ENCODE measurements at regions of chr10 and their contacts with region 1.

Region 1: DNA sequence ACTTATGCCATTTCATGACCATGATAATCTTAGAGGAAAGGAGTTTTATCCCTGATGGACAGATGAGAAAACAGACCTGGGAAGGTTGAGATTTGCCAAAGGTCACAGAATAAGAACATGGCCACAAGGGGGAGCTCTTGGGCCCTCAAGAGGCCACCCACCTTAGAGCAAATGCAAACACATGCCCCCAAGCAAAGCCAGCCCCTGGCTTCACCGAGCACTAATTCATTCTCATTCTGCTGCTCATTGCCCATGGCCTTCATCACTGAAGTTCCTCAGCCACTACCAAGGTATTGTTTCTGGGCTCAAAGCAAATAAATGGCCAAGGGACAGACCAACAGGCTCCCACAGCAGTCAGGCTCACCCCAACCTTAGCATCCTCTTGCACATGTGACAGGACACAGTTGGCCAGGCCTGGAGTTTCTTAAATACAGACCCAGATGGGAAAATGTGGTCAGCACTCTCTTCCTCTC is 44.2 kb downstream of the PDLIM1 start:
- DNase-seq: peak; percentile 68
- H3K4me3 ChIP-seq: no peak overlapping the region
- H3K27ac ChIP-seq: no peak overlapping the region
- H3K4me1 ChIP-seq: no peaks in the 10 kb centered on the region
- H3K27me3 ChIP-seq: peaks cover 18% of the 10 kb centered on the region
- CTCF ChIP-seq: peak; percentile 78

Region 2: DNA sequence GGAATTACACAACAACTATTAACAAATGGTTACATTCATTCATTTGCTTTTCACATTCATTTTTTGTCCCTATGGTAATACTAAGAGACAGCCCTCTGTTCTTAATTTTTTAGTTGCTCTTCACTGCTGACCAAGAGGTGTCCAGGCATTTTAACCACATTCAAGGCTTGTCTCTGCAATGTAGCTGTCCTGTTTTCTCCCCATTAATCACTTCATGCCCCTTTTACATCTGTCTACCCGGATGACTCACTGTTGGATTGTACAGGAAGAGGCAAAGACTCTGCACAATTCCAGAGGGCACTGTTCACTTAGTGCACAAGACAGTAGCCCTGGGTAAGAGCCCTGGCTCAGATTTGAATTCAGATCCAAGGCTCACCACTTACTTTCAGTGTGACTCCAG is 1052.4 kb before region 1 on chr10:
- CTCF ChIA-PET with region 1: no interaction called
- POLR2A ChIA-PET with region 1: no interaction called
- intact Hi-C with region 1: no loop called
- DNase-seq: peak; percentile 22
- H3K4me3 ChIP-seq: no peak overlapping the region
- H3K27ac ChIP-seq: no peak overlapping the region
- H3K4me1 ChIP-seq: peaks cover 3% of the 10 kb centered on the region
- H3K27me3 ChIP-seq: no peaks in the 10 kb centered on the region
- CTCF ChIP-seq: no peak

Region 3: DNA sequence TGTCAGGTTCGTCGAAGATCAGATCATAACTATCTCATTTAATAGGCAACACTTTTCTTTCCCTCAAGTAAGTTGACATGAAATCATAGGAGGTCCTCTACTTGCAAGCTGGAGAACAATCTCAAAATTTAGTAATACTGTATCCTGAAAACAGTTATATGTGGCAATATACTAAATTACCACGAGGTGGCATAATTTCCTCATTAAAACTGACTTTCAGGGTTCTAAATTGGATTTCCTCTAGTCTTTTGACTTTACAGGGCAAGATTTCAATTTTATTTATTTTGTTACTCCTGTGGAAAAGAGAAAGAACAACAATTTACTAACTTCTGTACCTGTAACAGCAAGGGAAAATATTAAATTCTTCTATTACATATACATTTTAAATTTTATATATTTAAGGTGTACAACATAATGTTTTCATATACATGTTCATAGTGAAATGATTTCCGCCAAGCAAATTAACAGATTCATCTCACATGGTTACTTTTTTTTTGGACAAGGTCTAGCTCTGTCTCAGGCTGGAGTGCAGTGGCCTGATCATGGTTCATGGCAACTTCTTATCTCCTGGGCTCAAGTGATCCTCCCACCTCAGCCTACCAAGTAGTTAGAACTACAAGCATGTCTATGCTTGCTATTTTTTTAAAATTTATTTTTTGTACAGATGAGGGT is 616.5 kb before region 1 on chr10:
- CTCF ChIA-PET with region 1: no interaction called
- POLR2A ChIA-PET with region 1: no interaction called
- intact Hi-C with region 1: loop called (anchors 1 kb)
- DNase-seq: peak; percentile 49
- H3K4me3 ChIP-seq: no peak overlapping the region
- H3K27ac ChIP-seq: no peak overlapping the region
- H3K4me1 ChIP-seq: no peaks in the 10 kb centered on the region
- H3K27me3 ChIP-seq: no peaks in the 10 kb centered on the region
- CTCF ChIP-seq: peak; percentile 72

Region 4: DNA sequence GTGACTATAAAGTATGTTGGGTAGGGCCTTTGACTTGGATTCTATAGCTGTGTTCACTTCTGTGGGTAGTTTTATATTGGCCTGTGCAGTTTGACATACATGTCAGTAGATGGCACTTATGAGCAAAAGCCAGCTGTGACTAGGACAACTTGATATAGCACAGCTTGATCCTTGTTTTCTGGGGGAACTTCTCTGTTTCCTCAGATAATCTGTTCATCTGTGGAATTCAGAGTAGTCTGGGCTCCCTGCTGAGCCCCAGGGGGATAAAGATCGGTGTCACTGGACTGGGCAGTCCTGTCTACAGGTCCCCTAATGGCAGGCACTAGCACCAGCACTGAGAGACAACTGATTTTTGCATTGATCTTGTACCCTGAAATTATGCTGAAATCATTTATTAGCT is 282.7 kb before region 1 on chr10:
- CTCF ChIA-PET with region 1: no interaction called
- POLR2A ChIA-PET with region 1: no interaction called
- intact Hi-C with region 1: loop called (anchors 2 kb)
- DNase-seq: peak; percentile 50
- H3K4me3 ChIP-seq: no peak overlapping the region
- H3K27ac ChIP-seq: no peak overlapping the region
- H3K4me1 ChIP-seq: no peaks in the 10 kb centered on the region
- H3K27me3 ChIP-seq: no peaks in the 10 kb centered on the region
- CTCF ChIP-seq: peak; percentile 60

Region 5: DNA sequence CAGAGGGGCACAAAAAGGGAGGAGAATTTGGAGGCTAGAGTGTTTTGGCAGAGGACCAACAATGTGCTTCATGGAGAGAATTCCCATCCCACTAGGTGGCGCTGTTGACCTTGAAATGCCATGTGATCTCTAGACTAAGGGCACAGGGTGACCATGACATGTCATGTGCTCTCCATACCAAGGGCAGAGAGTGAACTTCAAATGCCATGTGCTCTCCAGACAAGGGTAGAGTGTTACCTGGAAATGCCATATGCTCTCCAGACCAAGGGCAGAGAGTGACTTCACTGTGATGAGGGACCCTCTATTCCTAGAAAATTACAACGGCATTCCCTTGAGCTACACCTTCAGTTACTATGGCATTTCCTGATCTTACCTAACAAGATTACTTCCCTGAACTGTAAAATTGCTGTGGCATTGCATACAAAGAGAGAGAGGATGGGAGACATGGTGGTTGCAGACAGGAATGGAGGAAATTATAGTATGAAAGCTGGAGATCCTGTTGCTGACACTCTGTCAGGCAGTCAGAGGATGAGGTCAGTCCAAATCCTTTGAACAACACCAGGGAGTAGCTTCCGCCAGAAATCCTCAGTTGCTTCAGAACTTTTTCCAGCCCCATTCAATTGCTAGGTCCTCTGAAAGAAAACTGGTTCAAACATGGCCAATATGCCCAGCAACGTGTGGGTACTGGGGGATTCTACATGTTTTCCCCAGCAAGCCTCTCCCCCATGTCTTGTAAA is 113.4 kb before region 1 on chr10:
- CTCF ChIA-PET with region 1: no interaction called
- POLR2A ChIA-PET with region 1: no interaction called
- intact Hi-C with region 1: loop called (anchors 1 kb)
- DNase-seq: peak; percentile 84
- H3K4me3 ChIP-seq: no peak overlapping the region
- H3K27ac ChIP-seq: no peak overlapping the region
- H3K4me1 ChIP-seq: no peaks in the 10 kb centered on the region
- H3K27me3 ChIP-seq: no peaks in the 10 kb centered on the region
- CTCF ChIP-seq: peak; percentile 77

Region 6: GRCh38 chr10:95183271-95184230 is 63.1 kb before region 1 on chr10:
- CTCF ChIA-PET with region 1: interaction called, 3 read pairs
- POLR2A ChIA-PET with region 1: no interaction called
- intact Hi-C with region 1: loop called (anchors 1 kb)
- DNase-seq: peak; percentile 57
- H3K4me3 ChIP-seq: peak overlapping the region; percentile 40
- H3K27ac ChIP-seq: no peak overlapping the region
- H3K4me1 ChIP-seq: no peaks in the 10 kb centered on the region
- H3K27me3 ChIP-seq: peaks cover 57% of the 10 kb centered on the region
- CTCF ChIP-seq: peak; percentile 64

Region 7: DNA sequence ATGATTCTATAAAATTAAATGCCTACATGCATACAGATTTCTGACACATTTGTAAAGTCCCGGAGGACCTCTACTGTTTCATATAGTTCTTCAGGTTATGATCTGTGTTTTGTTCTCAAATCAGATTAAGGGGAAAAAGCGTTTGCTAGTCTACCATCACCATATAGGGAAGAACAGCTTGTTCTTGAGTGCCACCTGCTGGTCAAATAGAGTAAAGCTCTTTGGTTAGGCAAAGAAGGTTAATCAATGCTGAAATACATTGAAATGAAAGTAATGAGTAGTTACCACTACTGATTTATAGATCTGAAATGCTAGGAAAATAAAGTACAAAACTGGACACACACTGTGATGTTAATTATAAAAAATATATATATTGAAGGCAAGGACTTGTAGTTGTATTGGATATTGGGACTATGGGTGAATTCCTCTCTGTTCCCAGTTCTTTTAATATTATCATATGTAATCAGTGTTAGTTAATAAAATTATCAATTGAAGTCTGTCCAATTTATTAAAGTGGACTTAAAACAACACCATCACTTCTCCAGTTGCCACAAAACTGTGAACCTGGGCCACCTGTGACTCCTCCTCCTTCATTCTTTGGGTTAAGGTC is 116.8 kb after region 1 on chr10:
- CTCF ChIA-PET with region 1: interaction called, 24 read pairs
- POLR2A ChIA-PET with region 1: no interaction called
- intact Hi-C with region 1: loop called (anchors 1 kb)
- DNase-seq: peak; percentile 70
- H3K4me3 ChIP-seq: no peak overlapping the region
- H3K27ac ChIP-seq: no peak overlapping the region
- H3K4me1 ChIP-seq: no peaks in the 10 kb centered on the region
- H3K27me3 ChIP-seq: peaks cover 4% of the 10 kb centered on the region
- CTCF ChIP-seq: peak; percentile 89

Region 8: DNA sequence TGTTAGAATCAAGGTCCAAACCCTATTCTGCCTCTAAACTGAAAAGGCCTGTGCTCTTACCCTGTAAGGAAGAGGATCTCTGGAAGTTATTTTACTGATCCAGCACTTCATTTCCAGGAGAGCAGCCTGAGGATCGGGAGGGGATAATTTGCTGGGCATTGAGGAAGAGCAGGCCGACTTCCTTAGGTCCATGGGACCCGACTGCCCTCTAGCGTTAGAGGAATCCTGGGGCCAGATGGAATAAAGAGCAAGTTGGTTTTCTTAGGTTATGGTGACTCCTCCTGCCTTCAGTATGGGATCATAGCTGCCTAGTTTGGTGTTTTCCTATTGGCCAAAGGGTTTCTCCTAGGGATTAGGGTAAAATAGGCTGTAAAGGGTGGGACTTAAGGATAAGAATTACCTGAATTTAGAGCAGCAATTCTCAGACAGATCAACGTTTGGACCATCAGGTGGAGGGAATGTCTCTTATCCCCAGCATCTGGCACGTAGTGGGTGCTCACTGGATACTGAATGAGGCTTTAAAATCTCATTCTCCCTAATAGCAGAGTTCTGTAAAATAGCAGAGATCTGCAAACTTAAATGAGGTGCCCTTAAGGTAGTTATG is 354.6 kb after region 1 on chr10:
- CTCF ChIA-PET with region 1: no interaction called
- POLR2A ChIA-PET with region 1: no interaction called
- intact Hi-C with region 1: loop called (anchors 10 kb)
- DNase-seq: peak; percentile 86
- H3K4me3 ChIP-seq: no peak overlapping the region
- H3K27ac ChIP-seq: no peak overlapping the region
- H3K4me1 ChIP-seq: no peaks in the 10 kb centered on the region
- H3K27me3 ChIP-seq: peaks cover 10% of the 10 kb centered on the region
- CTCF ChIP-seq: peak; percentile 90